HepG2 (cell line): ENCODE measurements at regions of chr5 and their contacts with region 1.

Region 1: GRCh38 chr5:64207978-64208377 is 42.3 kb downstream of the RNF180 start:
- DNase-seq: peak; percentile 8
- ATAC-seq: no peak
- H3K4me3 ChIP-seq: no peak overlapping the region
- H3K27ac ChIP-seq: no peak overlapping the region
- H3K4me1 ChIP-seq: no peaks in the 10 kb centered on the region
- H3K27me3 ChIP-seq: no peaks in the 10 kb centered on the region
- CTCF ChIP-seq: no peak
- EP300 ChIP-seq: no peak
- POLR2A ChIP-seq: no peak
- RAD21 ChIP-seq: no peak

Region 2: GRCh38 chr5:64074533-64074932 is 133.4 kb before region 1 on chr5:
- CTCF ChIA-PET with region 1: no interaction called
- POLR2A ChIA-PET with region 1: no interaction called
- in situ Hi-C with region 1: no loop called
- intact Hi-C with region 1: loop called (anchors 2 kb)
- DNase-seq: peak; percentile 21
- ATAC-seq: peak; percentile 72
- H3K4me3 ChIP-seq: no peak overlapping the region
- H3K27ac ChIP-seq: no peak overlapping the region
- H3K4me1 ChIP-seq: no peaks in the 10 kb centered on the region
- H3K27me3 ChIP-seq: no peaks in the 10 kb centered on the region
- CTCF ChIP-seq: peak; percentile 61
- EP300 ChIP-seq: no peak
- POLR2A ChIP-seq: no peak
- RAD21 ChIP-seq: no peak

Region 3: GRCh38 chr5:64147849-64148441 is 60.0 kb before region 1 on chr5:
- CTCF ChIA-PET with region 1: interaction called, 9 read pairs
- POLR2A ChIA-PET with region 1: no interaction called
- in situ Hi-C with region 1: no loop called
- intact Hi-C with region 1: loop called (anchors 1 kb)
- DNase-seq: peak; percentile 7
- ATAC-seq: peak; percentile 80
- H3K4me3 ChIP-seq: no peak overlapping the region
- H3K27ac ChIP-seq: no peak overlapping the region
- H3K4me1 ChIP-seq: no peaks in the 10 kb centered on the region
- H3K27me3 ChIP-seq: no peaks in the 10 kb centered on the region
- CTCF ChIP-seq: peak; percentile 79
- EP300 ChIP-seq: no peak
- POLR2A ChIP-seq: no peak
- RAD21 ChIP-seq: peak; percentile 56; the same call in 1 of the 2 replicates

Region 4: DNA sequence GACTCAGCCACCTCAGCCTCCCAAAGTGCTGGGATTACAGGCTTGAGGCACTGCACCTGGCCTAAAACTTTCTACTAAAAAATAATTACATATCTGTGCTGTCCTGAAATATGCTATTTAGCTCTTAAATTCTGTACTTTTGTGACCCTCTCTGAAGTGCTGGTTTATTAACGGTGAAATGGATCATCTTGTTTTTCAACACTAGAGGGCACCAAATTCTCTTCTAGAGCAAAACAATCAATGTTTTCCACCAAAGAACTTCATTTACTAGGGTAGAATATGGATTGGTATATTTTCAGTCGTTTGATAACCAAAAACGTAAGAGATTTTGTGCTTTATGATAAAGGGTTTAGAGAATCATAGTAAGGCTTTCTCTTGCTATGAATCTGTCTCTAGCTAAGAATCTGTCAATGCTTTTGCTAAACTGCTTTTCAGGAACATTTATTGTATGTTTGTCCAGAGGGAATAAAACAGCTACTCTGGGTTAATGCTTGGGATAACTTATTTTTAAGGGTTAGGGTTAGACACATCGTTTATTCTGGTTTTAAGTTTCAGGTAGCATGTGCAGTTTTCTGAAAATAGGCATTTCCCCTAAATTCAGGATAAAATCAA is 21.3 kb after region 1 on chr5:
- CTCF ChIA-PET with region 1: no interaction called
- POLR2A ChIA-PET with region 1: no interaction called
- in situ Hi-C with region 1: no loop called
- intact Hi-C with region 1: no loop called
- DNase-seq: peak; percentile 20
- ATAC-seq: peak; percentile 68
- H3K4me3 ChIP-seq: no peak overlapping the region
- H3K27ac ChIP-seq: no peak overlapping the region
- H3K4me1 ChIP-seq: no peaks in the 10 kb centered on the region
- H3K27me3 ChIP-seq: no peaks in the 10 kb centered on the region
- CTCF ChIP-seq: peak; percentile 64
- EP300 ChIP-seq: no peak
- POLR2A ChIP-seq: no peak
- RAD21 ChIP-seq: 0 out of 2 replicates have a peak, but pooled peaks have one; percentile 14